ENCODE measurements at regions of chr13 and their contacts with region 1.

Region 1: DNA sequence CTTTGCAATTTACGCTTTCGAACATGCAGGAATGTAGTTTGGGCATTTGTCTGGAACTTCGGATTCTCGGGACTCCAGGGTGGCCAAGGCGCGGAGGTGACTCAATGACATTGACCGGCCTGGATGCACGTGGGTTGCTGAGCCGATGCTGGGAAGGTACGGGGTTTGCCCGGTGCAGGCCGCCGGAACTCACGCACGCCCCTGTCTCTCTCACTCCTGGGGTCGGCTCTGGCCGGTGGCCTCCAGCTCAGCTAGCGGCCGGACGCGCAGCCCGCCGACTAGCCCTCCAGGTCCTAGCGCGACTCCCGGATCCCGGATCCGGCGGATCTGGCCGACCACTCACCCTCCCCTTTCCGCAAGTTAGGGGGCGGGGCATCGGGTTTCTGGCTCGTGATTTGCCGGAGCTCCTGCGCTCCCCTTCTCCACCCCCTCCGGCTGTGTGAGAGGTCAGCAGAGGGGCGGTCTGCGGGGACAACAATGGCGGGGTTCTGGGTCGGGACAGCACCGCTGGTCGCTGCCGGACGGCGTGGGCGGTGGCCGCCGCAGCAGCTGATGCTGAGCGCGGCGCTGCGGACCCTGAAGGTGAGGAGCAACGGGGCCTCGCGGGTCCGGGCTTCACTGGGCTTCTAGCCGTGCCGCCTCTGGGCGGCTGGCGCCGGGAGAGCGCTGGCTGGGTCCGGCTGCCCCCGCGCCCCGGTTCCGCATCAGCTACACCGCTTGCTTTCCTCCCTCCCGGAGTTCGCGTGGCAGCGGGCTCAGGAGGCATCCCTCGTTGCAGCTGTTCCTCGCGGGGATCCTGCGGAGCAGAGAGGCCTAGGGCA is at the start of gene PCCA:
- DNase-seq: peak; percentile 86
- ATAC-seq: peak; percentile 92
- H3K4me3 ChIP-seq: peak within 1 kb of the TSS; percentile 88
- H3K27ac ChIP-seq: no peak within 1 kb of the TSS
- H3K4me1 ChIP-seq: peaks cover 11% of the 10 kb centered on the region; the same call in 1 of the 2 replicates
- H3K27me3 ChIP-seq: no peaks in the 10 kb centered on the region
- CTCF ChIP-seq: no peak
- total RNA-seq, gene PCCA: 7.5 and 10.5 TPM in 2 replicates

Region 2: DNA sequence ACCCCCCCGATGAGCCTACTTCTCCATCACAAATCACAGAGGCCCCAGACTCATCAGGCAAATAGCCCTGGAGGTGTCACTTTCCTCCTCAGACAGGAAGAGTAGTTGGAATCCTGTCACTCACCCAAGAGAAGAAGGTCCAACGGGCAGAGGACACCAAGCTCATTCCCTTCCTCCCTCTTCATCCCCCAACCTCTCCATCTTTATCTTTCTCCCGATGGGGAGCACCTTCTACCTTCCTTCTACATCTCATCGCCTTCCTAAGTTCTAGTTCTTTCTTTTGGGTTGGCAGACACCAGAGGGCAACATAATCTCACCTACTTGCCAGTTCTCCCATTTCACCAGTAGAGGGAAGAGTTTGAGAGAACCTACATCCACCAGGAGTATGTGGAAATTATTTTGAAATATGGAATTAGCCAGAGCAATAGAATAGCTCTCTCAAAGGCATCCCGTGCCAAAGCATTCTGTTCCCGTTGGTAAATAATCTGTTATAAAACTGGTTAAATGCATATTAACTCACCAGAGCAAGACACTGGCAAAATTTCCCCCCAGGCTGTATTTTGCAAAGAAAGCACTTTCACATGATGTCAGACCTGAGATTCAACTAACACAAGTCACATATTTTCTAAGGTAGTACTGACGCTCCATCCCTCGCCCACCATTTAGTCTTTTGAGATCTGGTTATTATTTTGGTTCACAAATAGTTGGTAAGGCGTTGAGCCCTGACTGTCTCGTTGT is 172.3 kb before region 1 on chr13:
- CTCF ChIA-PET with region 1: no interaction called
- POLR2A ChIA-PET with region 1: no interaction called
- intact Hi-C with region 1: no loop called
- DNase-seq: peak; percentile 69
- ATAC-seq: peak; percentile 88
- H3K4me3 ChIP-seq: no peak overlapping the region
- H3K27ac ChIP-seq: no peak overlapping the region
- H3K4me1 ChIP-seq: no peaks in the 10 kb centered on the region
- H3K27me3 ChIP-seq: peaks cover 22% of the 10 kb centered on the region
- CTCF ChIP-seq: peak; percentile 95

Region 3: DNA sequence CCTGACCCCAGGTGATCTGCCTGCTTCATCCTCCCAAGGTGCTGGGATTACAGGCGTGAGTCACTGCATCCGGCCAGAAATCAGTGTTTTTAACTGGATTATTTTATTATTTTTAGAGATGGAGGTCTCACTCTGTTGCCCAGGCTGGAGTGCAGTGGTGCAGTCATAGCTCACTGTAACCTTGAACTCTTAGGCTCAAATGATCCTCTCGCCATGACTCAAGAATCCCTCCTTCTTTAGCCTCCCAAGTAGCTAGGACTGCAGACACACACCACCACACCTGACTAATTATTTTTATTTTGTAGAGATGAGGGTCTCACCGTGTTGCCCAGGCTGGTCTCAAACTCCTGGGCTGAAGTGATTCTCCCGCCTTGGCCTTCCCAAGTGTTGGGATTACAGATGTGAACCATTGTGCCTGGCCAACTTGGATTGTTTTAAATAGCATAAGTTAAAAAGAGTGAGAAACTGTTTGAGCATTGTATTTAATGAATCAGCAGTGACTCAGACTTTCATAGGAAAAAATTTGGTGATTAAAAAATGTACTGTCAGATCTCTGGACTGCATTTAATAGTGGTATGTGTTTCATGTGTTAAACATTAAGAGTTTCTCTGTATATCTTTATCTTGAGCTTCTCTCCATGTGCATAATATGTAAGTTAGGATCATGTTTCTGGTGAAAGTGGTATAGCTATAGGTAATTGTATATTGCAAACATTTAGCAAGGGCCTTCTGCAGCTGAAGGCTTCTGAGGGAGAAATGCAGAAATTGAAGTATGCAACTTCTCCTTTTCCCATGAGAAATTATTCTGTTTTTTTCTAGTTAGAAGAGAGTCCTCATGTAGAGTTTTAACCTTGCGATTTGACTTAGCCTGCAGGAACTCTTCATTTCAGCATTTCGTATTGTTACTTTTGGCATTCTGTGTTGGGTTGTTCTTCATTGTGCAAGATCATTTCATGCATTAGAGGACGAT is 121.3 kb after region 1 on chr13:
- CTCF ChIA-PET with region 1: no interaction called
- POLR2A ChIA-PET with region 1: no interaction called
- intact Hi-C with region 1: loop called (anchors 10 kb)
- DNase-seq: peak; percentile 67
- ATAC-seq: peak; percentile 71
- H3K4me3 ChIP-seq: no peak overlapping the region
- H3K27ac ChIP-seq: peak overlapping the region; percentile 54
- H3K4me1 ChIP-seq: peaks cover 31% of the 10 kb centered on the region
- H3K27me3 ChIP-seq: no peaks in the 10 kb centered on the region
- CTCF ChIP-seq: no peak

Measured in PC-3 (cell line).